GM10248 (cell line): ENCODE measurements at regions of chr16 and their contacts with region 1.

Region 1: DNA sequence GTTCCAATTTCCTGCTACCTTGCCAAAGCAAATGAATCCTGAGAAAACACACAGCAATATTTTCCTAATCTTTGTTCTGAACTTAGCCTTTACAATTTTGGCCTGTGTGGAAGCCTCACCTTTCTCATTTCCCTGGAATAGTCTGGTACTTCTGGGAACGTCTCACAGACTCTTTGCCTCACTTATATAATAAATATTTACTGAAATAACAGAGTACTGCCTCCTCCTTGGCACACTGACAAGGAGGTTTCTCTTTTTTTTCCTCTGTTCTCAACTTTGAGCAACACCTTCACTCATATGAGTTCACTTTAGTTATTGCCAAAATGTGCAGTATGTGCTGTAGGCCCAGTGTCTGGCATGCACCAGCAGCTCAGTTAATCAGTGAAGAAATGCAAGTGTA is 37.3 kb downstream of the HSD17B2 start:
- DNase-seq: no peak
- CTCF ChIP-seq: no peak

Region 2: GRCh38 chr16:82082543-82083244 is 10.4 kb after region 1 on chr16:
- CTCF ChIA-PET with region 1: interaction called, 11 read pairs
- POLR2A ChIA-PET with region 1: no interaction called
- DNase-seq: peak; percentile 20
- CTCF ChIP-seq: no peak

Region 3: GRCh38 chr16:82093666-82094300 is 21.5 kb after region 1 on chr16:
- CTCF ChIA-PET with region 1: no interaction called
- POLR2A ChIA-PET with region 1: no interaction called
- DNase-seq: no peak
- CTCF ChIP-seq: no peak

Region 4: DNA sequence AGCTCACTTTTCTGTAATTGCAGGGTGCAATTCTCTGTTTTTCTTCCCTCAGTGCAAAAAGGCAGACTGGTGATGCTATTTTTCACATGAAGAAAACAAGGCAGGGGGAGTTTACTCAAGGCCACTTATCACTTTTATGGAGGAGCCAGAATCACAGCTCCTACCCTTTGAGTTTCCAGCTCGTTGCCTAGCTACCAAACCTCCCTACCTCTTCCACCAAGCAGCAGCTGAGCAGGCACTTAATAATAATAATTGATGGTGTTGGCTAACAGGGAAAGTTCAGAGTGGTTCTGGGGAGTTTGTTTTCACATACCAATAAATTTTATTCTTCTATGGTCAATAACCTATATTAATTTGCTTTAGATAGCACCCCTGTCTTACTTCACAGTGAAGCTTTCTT is 129.6 kb after region 1 on chr16:
- CTCF ChIA-PET with region 1: no interaction called
- POLR2A ChIA-PET with region 1: no interaction called
- DNase-seq: no peak
- CTCF ChIP-seq: no peak